Transverse colon (tissue), 4 donors: ENCODE measurements at regions of chr13 and their contacts with region 1.

Region 1: DNA sequence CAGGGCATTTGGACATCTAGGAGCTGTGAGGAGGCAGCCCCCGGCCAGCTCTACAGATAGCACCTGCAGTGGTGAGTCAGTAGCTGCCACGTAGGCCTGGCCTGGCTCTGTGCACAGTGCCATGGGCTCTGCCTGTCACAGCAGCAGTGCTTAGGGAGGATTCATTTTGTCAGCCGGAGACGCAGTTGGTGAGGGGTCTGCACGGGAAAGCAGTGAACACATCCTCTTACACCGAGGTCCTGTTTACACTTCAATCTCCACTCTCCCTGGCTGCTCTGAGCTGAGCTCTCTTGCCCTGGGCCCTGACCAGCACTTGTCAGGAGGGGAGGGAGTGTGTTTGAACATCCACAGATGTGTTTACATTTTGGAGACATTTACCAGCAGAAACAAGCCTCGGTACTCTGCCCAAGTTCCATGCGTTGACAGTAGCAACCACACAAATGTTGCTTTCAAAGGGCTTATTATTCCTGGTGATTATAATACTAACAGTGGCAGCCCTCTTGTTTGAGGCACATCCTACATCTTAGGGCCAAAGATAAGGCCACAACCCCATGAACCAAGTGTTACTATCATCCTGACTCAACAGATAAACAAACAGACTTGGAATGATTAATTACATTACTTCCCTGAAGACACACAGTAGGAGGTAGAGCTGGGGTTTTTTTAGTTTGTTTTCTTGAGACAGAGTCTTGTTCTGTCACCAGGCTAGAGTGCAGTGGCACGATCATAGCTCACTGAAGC is 148.9 kb downstream of the USP12 start:
- DNase-seq: no peak
- H3K4me3 ChIP-seq: no peak overlapping the region
- H3K27ac ChIP-seq: peak overlapping the region; percentile 65 to 82 (median 74)
- H3K4me1 ChIP-seq: peaks cover 8 to 43% (median 34%) of the 10 kb centered on the region in 4 donors
- H3K27me3 ChIP-seq: no peaks in the 10 kb centered on the region
- CTCF ChIP-seq: no peak
- EP300 ChIP-seq: peak; percentile 62
- POLR2A ChIP-seq: no peak

Region 2: GRCh38 chr13:26412263-26412662 is 610.5 kb before region 1 on chr13:
- in situ Hi-C with region 1: no loop called
- intact Hi-C with region 1: no loop called
- DNase-seq: no peak
- H3K4me3 ChIP-seq: no peak overlapping the region
- H3K27ac ChIP-seq: no peak overlapping the region
- H3K4me1 ChIP-seq: no peaks in the 10 kb centered on the region
- H3K27me3 ChIP-seq: no peaks in the 10 kb centered on the region
- CTCF ChIP-seq: no peak
- EP300 ChIP-seq: no peak
- POLR2A ChIP-seq: no peak

Region 3: DNA sequence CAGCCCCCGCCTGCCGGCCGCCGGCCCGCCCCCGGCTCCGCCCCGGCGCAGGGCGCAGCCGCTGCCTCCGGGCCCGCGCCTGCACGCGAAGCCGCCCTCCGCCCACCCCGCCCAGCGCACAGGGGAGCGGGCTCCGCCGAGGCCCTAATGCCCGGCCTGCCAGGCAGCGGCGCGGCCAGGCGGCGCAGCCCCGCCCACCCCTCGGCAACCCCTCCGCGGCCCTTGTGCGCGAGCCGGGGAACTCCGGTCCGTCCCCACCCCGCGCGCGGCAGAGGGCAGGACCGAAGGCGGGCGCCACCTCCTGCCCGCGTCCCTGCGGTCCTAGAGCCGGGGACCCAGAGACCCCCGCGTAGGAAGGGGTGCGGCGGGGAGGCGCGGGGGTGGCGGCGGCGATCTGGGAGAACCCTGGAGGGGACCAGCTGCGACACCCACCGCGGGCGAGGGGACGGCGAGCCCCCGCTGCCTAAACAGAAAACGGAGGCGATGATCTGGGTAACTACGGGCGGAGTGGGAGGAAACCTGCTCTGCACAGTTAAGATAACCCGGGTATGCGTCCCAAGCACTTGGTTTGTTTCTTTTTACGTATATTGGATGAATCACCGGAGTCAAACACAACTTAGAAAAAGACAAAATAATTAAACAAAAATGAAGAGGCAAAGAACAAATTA is 149.2 kb after region 1 on chr13:
- in situ Hi-C with region 1: no loop called
- intact Hi-C with region 1: loop called (anchors 10 kb)
- DNase-seq: peak; percentile 96
- H3K4me3 ChIP-seq: peak overlapping the region; percentile 72 to 92 (median 80)
- H3K27ac ChIP-seq: peak overlapping the region; percentile 93 to 97 (median 96)
- H3K4me1 ChIP-seq: peaks cover 22 to 46% (median 32%) of the 10 kb centered on the region in 4 donors
- H3K27me3 ChIP-seq: no peaks in the 10 kb centered on the region
- CTCF ChIP-seq: peak in 1 of 5 experiments; percentile 10
- EP300 ChIP-seq: no peak
- POLR2A ChIP-seq: peak; percentile 26

Region 4: DNA sequence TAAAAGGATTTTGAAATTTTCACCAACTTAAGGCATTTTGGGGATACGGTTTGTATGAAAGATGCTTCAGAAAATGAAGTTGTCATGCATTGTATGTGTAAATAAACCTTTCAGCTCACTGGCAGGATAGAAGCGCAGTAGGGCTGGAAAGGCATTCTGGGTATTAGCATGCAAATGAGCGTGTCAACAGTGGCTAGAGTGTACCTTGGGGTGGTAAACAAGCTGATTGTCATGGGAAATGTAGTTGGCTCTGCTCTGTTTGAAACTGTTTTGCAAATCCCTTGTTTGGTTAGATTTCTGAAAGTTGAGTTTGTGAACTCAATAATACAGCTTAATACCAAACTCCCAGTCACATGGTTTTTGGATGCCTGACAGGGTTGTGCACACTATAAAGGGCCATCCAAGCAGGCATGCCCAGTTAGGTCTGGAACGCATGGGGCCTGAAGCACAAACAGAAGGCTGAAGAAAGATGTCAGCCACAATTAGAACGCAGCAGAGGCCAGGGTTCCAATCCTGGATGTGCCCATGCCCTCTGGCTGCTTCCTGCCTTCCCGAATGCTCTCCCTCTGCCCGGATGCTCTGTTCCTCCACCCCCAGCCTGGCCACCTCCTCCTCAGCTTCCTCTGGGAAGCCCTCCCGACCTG is 784.1 kb after region 1 on chr13:
- in situ Hi-C with region 1: no loop called
- intact Hi-C with region 1: no loop called
- DNase-seq: no peak
- H3K4me3 ChIP-seq: no peak overlapping the region
- H3K27ac ChIP-seq: no peak overlapping the region
- H3K4me1 ChIP-seq: no peaks in the 10 kb centered on the region
- H3K27me3 ChIP-seq: peaks cover 56% of the 10 kb centered on the region
- CTCF ChIP-seq: no peak
- EP300 ChIP-seq: no peak
- POLR2A ChIP-seq: no peak

Region 5: DNA sequence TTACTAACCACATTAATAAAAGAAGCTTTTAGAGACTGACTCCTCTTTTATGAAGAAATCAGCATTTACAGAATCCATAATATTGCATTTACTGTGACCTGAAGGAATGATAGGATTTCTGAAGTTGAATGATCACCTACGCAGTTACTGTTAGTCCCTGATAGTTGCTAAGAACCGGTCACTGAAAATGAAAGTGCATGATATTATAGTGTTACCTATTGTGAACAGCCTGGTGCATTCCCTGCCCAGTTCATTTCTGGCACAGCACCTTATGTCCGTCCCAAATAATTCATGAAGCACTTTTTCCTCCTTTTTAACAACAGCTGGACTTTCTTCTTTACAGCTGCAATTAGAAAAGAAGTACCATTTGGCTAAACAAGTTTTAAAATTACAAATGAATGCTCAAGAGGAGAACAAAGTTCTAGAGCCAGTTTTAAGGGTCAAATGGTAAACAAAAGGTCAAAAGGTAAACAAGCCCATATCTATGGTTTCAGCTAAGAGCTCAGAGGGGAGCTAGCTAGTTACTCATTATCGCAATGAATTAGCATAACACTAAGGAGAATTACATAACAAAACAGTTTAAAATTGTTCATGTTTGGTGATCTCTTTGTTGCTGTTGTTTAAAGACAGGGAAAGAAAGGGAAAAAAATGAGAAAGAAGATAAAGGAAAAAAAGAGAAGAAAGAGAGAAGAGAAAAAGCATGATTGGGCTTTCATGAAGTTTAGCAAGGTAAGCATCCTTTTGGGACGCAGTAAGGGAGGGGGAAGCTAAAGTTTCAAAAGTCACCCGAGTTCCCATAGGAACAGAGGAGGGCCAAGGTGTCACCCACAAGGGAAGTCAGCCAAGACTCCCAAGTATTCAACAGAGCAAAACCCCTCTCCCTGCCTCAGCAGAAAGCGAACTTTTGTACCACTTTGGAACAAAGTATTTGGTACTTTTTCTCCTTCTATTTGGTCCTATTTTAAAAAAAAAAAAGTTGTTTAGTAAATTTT is 1027.4 kb after region 1 on chr13:
- in situ Hi-C with region 1: no loop called
- intact Hi-C with region 1: no loop called
- DNase-seq: no peak
- H3K4me3 ChIP-seq: no peak overlapping the region
- H3K27ac ChIP-seq: peak overlapping the region in 2 of 4 donors; percentile 9 to 66
- H3K4me1 ChIP-seq: no peaks in the 10 kb centered on the region
- H3K27me3 ChIP-seq: peaks cover 11% of the 10 kb centered on the region
- CTCF ChIP-seq: no peak
- EP300 ChIP-seq: no peak
- POLR2A ChIP-seq: no peak